GM12878 (cell line): ENCODE measurements at regions of chr11 and their contacts with region 1.

Region 1: GRCh38 chr11:44634401-44635281 is 69.2 kb downstream of the CD82 start:
- DNase-seq: no peak
- ATAC-seq: peak; percentile 37
- H3K4me3 ChIP-seq: no peak overlapping the region
- H3K27ac ChIP-seq: no peak overlapping the region
- H3K4me1 ChIP-seq: no peaks in the 10 kb centered on the region
- H3K27me3 ChIP-seq: no peaks in the 10 kb centered on the region
- CTCF ChIP-seq: no peak
- EP300 ChIP-seq: no peak
- POLR2A ChIP-seq: no peak
- RAD21 ChIP-seq: no peak

Region 2: GRCh38 chr11:44456544-44457300 is 177.9 kb before region 1 on chr11:
- CTCF ChIA-PET with region 1: no interaction called
- POLR2A ChIA-PET with region 1: no interaction called
- RAD21 ChIA-PET with region 1: no interaction called
- SMC1A ChIA-PET with region 1: no interaction called
- in situ Hi-C with region 1: no loop called
- intact Hi-C with region 1: no loop called
- DNase-seq: no peak
- ATAC-seq: peak; percentile 54
- H3K4me3 ChIP-seq: no peak overlapping the region
- H3K27ac ChIP-seq: no peak overlapping the region
- H3K4me1 ChIP-seq: no peaks in the 10 kb centered on the region
- H3K27me3 ChIP-seq: no peaks in the 10 kb centered on the region; a peak in 1 of 4 replicates
- CTCF ChIP-seq: peak in 1 of 3 experiments; percentile 27; a peak in 1 of 6 replicates
- EP300 ChIP-seq: no peak
- POLR2A ChIP-seq: no peak
- RAD21 ChIP-seq: no peak

Region 3: DNA sequence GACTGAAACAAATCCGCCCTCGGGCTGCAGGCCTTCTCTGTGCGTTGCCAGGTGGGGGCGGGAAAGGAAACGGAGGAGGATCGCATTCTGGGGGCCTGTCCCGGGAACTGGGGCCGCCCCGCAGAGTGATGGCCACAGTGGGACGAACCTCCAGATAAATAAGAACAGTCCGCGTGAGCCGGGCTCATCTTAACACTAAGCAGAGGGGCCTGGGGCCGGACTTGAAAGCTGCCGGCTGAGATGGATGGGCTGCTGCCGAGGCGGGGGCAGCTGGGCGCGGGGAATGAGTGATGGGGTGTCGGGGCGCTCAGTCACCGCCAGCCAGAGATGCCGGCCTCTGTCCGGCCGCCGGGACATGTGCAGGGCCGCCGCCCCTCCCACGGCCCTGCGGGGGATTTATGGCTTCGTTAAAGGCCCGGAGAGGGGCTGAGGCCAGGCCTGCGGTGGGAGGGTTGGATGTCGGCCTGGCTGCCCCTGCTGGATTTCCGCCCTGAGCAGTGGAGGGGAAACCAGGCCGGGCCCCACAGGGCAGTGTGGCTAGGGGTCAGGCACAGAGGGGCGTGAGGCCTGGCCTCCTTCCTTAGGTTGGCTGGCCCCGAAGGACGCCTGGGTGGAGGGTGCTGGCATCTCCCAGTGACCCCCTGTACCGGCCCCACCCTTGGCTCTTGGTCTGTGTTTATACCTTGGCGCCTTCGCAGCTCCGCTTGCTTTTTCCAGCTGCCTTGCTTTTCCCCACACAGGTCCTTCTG is 114.5 kb before region 1 on chr11:
- CTCF ChIA-PET with region 1: no interaction called
- POLR2A ChIA-PET with region 1: no interaction called
- RAD21 ChIA-PET with region 1: no interaction called
- SMC1A ChIA-PET with region 1: no interaction called
- in situ Hi-C with region 1: no loop called
- intact Hi-C with region 1: no loop called
- DNase-seq: no peak
- ATAC-seq: no peak
- H3K4me3 ChIP-seq: no peak overlapping the region
- H3K27ac ChIP-seq: no peak overlapping the region
- H3K4me1 ChIP-seq: no peaks in the 10 kb centered on the region
- H3K27me3 ChIP-seq: peaks cover 0 to 5% of the 10 kb centered on the region in 2 experiments; a peak in 2 of 4 replicates
- CTCF ChIP-seq: no peak
- EP300 ChIP-seq: no peak
- POLR2A ChIP-seq: no peak
- RAD21 ChIP-seq: no peak

Region 4: DNA sequence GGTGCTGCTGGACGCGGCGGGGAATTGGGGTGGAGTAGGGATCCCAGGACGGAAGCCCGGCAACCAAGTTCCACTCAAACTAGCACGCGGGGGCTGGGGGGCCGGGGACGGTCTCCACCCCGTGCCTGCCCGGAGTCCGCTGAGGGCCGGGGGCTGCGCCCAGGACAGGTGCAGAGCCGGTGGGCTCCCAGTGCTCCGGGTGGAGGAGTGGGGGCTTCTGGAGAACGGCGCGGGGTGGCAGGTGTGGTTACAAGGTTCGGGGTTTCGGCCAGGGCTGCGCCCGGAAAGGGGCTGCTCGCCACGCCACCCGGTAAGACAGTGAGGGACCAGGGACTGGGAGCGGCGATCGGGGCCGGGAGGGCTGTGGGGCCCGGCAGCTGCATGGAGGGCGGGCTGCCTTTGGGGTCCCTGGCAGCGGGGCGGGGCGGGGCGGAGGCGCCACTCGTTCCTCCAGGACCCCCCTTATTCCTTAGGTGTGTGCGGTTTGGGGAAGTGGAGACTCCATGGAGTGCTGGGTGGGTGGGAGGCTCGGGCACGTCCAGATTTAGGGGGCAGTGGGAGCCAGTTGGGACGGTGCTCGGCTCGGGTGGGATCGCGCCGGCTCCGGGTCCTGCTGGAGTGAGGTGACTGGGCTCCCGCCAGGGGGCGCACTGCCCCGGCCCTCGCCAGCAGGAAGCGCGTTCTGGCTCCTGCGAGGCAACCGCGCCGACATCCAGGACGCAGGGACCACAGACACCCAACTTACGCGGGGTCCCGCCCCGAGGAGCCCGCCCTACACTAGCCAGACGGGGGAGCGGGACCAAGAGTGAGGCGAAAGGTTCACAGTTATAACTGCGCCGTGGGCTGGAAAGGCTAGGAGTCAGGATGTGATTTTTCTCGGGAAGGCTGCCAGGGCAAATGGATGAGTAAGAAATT is 93.0 kb after region 1 on chr11:
- CTCF ChIA-PET with region 1: no interaction called
- POLR2A ChIA-PET with region 1: no interaction called
- RAD21 ChIA-PET with region 1: no interaction called
- SMC1A ChIA-PET with region 1: no interaction called
- in situ Hi-C with region 1: no loop called
- intact Hi-C with region 1: loop called (anchors 5 kb)
- DNase-seq: no peak
- ATAC-seq: peak; percentile 90
- H3K4me3 ChIP-seq: peak overlapping the region; percentile 86
- H3K27ac ChIP-seq: no peak overlapping the region
- H3K4me1 ChIP-seq: peaks cover 11% of the 10 kb centered on the region
- H3K27me3 ChIP-seq: peaks cover 0 to 3% of the 10 kb centered on the region in 2 experiments; a peak in 3 of 4 replicates
- CTCF ChIP-seq: peak; percentile 77 to 95 (median 85)
- EP300 ChIP-seq: no peak
- POLR2A ChIP-seq: no peak
- RAD21 ChIP-seq: peak; percentile 61

Region 5: GRCh38 chr11:44893846-44894617 is 259.4 kb after region 1 on chr11:
- CTCF ChIA-PET with region 1: interaction called, 3 read pairs
- POLR2A ChIA-PET with region 1: no interaction called
- RAD21 ChIA-PET with region 1: no interaction called
- SMC1A ChIA-PET with region 1: no interaction called
- in situ Hi-C with region 1: loop called (anchors 5 kb)
- intact Hi-C with region 1: no loop called
- DNase-seq: no peak
- ATAC-seq: peak; percentile 98
- H3K4me3 ChIP-seq: no peak overlapping the region
- H3K27ac ChIP-seq: no peak overlapping the region
- H3K4me1 ChIP-seq: no peaks in the 10 kb centered on the region
- H3K27me3 ChIP-seq: no peaks in the 10 kb centered on the region; a peak in 2 of 4 replicates
- CTCF ChIP-seq: peak; percentile 81 to 86 (median 83)
- EP300 ChIP-seq: no peak
- POLR2A ChIP-seq: no peak
- RAD21 ChIP-seq: peak; percentile 81